Cardiac septum (tissue), 1 donor: ENCODE measurements at regions of chr5 and their contacts with region 1.

Region 1: DNA sequence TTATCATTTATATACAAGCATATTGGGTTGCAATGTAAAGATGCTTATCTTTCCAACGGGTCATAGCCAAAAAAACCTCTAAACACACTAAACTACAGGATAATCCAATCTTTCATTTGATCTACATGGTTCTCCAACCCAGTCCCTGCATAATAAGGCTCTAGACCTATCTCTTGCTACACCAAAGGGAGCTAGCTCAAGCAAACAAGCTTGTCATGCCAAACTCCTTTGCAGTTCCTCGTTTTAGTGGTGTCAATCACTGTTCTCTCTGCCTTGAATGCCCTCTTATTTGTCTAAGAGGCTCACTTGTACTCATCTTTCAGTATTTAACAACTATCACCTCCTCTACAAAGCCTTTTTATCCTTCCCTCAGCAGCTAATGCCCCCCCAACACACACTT is 5.6 kb downstream of the HOMER1 start:
- DNase-seq: no peak

Region 2: DNA sequence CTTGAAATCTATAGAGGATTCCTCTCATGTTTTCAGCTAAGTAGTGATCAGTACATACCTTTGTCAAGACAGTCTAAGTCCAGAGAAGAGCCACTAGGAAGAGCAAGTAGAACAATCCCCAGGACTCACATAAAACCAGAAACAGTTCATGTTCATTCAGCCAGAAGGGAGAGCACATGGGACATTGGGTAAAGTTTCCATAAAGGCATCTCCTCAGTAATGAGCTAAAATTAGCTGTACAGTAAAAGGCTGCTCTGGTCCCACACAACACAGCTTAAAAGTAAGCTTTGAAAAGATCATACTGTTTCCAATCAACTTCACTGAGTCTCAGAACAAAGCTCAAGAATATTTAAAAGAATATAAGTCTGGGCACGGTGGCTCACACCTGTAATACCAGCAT is 26.8 kb before region 1 on chr5:
- intact Hi-C with region 1: loop called (anchors 2 kb)
- DNase-seq: no peak